HAP-1 (cell line): ENCODE measurements at regions of chr14 and their contacts with region 1.

Region 1: DNA sequence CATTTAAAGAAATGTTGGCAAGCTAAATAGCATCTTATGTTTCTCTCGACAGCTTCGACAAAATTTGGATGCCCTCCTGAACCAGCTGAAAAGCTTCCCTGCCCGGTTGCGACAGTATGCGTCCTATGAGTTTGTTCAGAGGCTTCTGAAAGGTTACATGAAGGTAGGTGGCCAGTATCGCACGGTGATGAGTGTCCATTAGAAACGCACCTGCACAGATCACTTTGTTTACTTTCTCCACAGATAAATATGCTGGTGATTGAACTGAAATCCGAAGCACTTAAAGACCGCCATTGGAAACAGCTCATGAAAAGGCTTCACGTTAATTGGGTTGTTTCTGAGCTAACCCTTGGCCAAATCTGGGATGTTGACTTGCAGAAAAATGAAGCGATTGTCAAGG is 36.5 kb downstream of the DYNC1H1 start:
- DNase-seq: no peak
- H3K4me3 ChIP-seq: no peak overlapping the region
- H3K4me1 ChIP-seq: no peaks in the 10 kb centered on the region
- H3K27me3 ChIP-seq: no peaks in the 10 kb centered on the region

Region 2: GRCh38 chr14:102043251-102044025 is 42.5 kb after region 1 on chr14:
- in situ Hi-C with region 1: loop called (anchors 5 kb)
- DNase-seq: no peak
- H3K4me3 ChIP-seq: no peak overlapping the region
- H3K4me1 ChIP-seq: no peaks in the 10 kb centered on the region
- H3K27me3 ChIP-seq: no peaks in the 10 kb centered on the region

Region 3: GRCh38 chr14:102408724-102409123 is 407.8 kb after region 1 on chr14:
- in situ Hi-C with region 1: no loop called
- DNase-seq: no peak
- H3K4me3 ChIP-seq: no peak overlapping the region
- H3K4me1 ChIP-seq: no peaks in the 10 kb centered on the region
- H3K27me3 ChIP-seq: no peaks in the 10 kb centered on the region